CD4-positive, alpha-beta memory T cell (primary cell): ENCODE measurements at regions of chr13 and their contacts with region 1.

Region 1: DNA sequence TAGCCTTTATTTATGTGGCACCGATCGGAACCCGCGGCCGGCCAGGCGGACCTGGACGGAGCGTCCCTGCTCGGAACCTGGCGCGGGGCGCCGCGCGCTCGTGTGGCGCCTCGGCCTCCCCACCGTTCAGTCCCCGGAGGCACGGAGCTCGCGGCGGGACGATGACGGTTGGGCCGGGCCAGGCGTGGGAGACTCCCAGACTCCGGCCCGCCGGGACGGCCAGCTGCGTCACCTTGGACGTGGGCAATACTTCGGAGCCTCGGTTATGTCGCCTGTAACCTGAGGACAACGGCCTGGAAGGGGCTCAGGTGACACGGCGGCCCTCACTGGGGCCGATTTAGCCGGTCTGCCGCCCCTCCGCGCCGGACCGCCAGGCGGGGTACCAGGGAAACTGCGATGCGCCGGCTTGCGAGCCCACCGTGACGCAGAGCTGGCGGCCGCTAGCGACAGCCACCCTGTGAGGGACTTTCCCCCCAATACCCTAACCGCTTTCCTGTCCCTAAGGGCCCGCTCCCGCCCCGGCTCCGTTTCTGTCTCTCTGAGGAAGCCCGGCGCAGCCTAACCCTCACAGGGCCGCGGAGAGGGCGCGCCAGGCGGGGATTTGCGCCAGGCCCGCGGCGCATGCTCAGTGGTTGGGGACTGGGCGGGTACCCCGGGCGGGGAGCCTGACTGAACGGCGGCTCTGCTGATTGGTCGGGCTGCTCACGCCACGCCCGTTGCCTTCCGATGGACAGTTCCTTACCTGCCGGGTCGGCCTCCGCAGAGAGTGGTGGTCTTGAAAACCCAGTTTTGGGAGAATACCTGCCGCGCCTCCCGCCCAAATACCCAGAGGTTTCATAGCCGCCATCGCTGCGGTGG is 109.5 kb upstream of the DOCK9 start:
- DNase-seq: peak; percentile 91 to 94 (median 92)
- H3K4me3 ChIP-seq: peak overlapping the region; percentile 37 to 88
- H3K4me3 Mint-ChIP-seq: peak overlapping the region; percentile 96 to 99 (median 98)
- H3K27ac ChIP-seq: peak overlapping the region; percentile 83
- H3K27ac Mint-ChIP-seq: peak overlapping the region; percentile 99 to 100 (median 99)
- H3K4me1 ChIP-seq: peaks cover 40% of the 10 kb centered on the region
- H3K4me1 Mint-ChIP-seq: peaks cover 27 to 53% (median 39%) of the 10 kb centered on the region in 4 donors
- H3K27me3 ChIP-seq: no peaks in the 10 kb centered on the region
- H3K27me3 Mint-ChIP-seq: no peaks in the 10 kb centered on the region

Region 2: GRCh38 chr13:98869408-98870090 is 217.8 kb before region 1 on chr13:
- CTCF ChIA-PET with region 1: interaction called, 5 read pairs
- POLR2A ChIA-PET with region 1: no interaction called
- intact Hi-C with region 1: loop called (anchors 5 kb)
- DNase-seq: peak in 3 of 5 donors; percentile 6 to 11 (median 10)
- H3K4me3 ChIP-seq: no peak overlapping the region
- H3K4me3 Mint-ChIP-seq: no peak overlapping the region
- H3K27ac ChIP-seq: no peak overlapping the region
- H3K27ac Mint-ChIP-seq: peak overlapping the region in 2 of 7 donors; percentile 6 to 41
- H3K4me1 ChIP-seq: no peaks in the 10 kb centered on the region
- H3K4me1 Mint-ChIP-seq: peaks cover 0 to 4% (median 3%) of the 10 kb centered on the region in 4 donors
- H3K27me3 ChIP-seq: no peaks in the 10 kb centered on the region
- H3K27me3 Mint-ChIP-seq: no peaks in the 10 kb centered on the region

Region 3: GRCh38 chr13:99033814-99034213 is 53.5 kb before region 1 on chr13:
- CTCF ChIA-PET with region 1: interaction called, 13 read pairs
- POLR2A ChIA-PET with region 1: interaction called, 7 read pairs
- intact Hi-C with region 1: loop called (anchors 2 kb)
- DNase-seq: peak in 2 of 5 donors; percentile 21 to 28
- H3K4me3 ChIP-seq: no peak overlapping the region
- H3K4me3 Mint-ChIP-seq: no peak overlapping the region
- H3K27ac ChIP-seq: no peak overlapping the region
- H3K27ac Mint-ChIP-seq: peak overlapping the region in 3 of 7 donors; percentile 55 to 85 (median 63)
- H3K4me1 ChIP-seq: peaks cover 22% of the 10 kb centered on the region
- H3K4me1 Mint-ChIP-seq: peaks cover 32 to 76% (median 51%) of the 10 kb centered on the region in 4 donors
- H3K27me3 ChIP-seq: no peaks in the 10 kb centered on the region
- H3K27me3 Mint-ChIP-seq: no peaks in the 10 kb centered on the region

Region 4: GRCh38 chr13:99046851-99047250 is 40.5 kb before region 1 on chr13:
- CTCF ChIA-PET with region 1: interaction called, 15 read pairs
- POLR2A ChIA-PET with region 1: interaction called, 226 read pairs
- intact Hi-C with region 1: loop called (anchors 1 kb)
- DNase-seq: no peak
- H3K4me3 ChIP-seq: peak overlapping the region; percentile 1 to 32
- H3K4me3 Mint-ChIP-seq: peak overlapping the region; percentile 70 to 90 (median 81)
- H3K27ac ChIP-seq: peak overlapping the region; percentile 71
- H3K27ac Mint-ChIP-seq: peak overlapping the region; percentile 91 to 98 (median 95)
- H3K4me1 ChIP-seq: peaks cover 99% of the 10 kb centered on the region
- H3K4me1 Mint-ChIP-seq: peaks cover 79 to 100% (median 89%) of the 10 kb centered on the region in 4 donors
- H3K27me3 ChIP-seq: no peaks in the 10 kb centered on the region
- H3K27me3 Mint-ChIP-seq: no peaks in the 10 kb centered on the region

Region 5: GRCh38 chr13:99067160-99067985 is 20.0 kb before region 1 on chr13:
- CTCF ChIA-PET with region 1: interaction called, 5 read pairs
- POLR2A ChIA-PET with region 1: interaction called, 21 read pairs
- intact Hi-C with region 1: no loop called
- DNase-seq: no peak
- H3K4me3 ChIP-seq: no peak overlapping the region
- H3K4me3 Mint-ChIP-seq: peak overlapping the region in 7 of 8 donors; percentile 42 to 75 (median 67)
- H3K27ac ChIP-seq: no peak overlapping the region
- H3K27ac Mint-ChIP-seq: peak overlapping the region; percentile 56 to 86 (median 82)
- H3K4me1 ChIP-seq: peaks cover 55% of the 10 kb centered on the region
- H3K4me1 Mint-ChIP-seq: peaks cover 56 to 93% (median 74%) of the 10 kb centered on the region in 4 donors
- H3K27me3 ChIP-seq: no peaks in the 10 kb centered on the region
- H3K27me3 Mint-ChIP-seq: no peaks in the 10 kb centered on the region

Region 6: GRCh38 chr13:99176309-99177276 is 89.3 kb after region 1 on chr13:
- CTCF ChIA-PET with region 1: interaction called, 10 read pairs
- POLR2A ChIA-PET with region 1: interaction called, 3 read pairs
- intact Hi-C with region 1: loop called (anchors 1 kb)
- DNase-seq: peak; percentile 69 to 79 (median 75)
- H3K4me3 ChIP-seq: peak overlapping the region in 1 of 2 donors; percentile 19
- H3K4me3 Mint-ChIP-seq: peak overlapping the region in 7 of 8 donors; percentile 62 to 80 (median 71)
- H3K27ac ChIP-seq: no peak overlapping the region
- H3K27ac Mint-ChIP-seq: peak overlapping the region in 6 of 7 donors; percentile 37 to 81 (median 68)
- H3K4me1 ChIP-seq: peaks cover 44% of the 10 kb centered on the region
- H3K4me1 Mint-ChIP-seq: peaks cover 32 to 43% (median 36%) of the 10 kb centered on the region in 4 donors
- H3K27me3 ChIP-seq: no peaks in the 10 kb centered on the region
- H3K27me3 Mint-ChIP-seq: no peaks in the 10 kb centered on the region

Region 7: GRCh38 chr13:99258210-99258860 is 171.0 kb after region 1 on chr13 and contains the start of gene GPR18:
- CTCF ChIA-PET with region 1: no interaction called
- POLR2A ChIA-PET with region 1: interaction called, 3 read pairs
- intact Hi-C with region 1: loop called (anchors 5 kb)
- DNase-seq: peak; percentile 50 to 69 (median 62)
- H3K4me3 ChIP-seq: peak within 1 kb of the TSS; percentile 52 to 67
- H3K4me3 Mint-ChIP-seq: peak within 1 kb of the TSS; percentile 89 to 98 (median 94)
- H3K27ac ChIP-seq: peak within 1 kb of the TSS; percentile 60
- H3K27ac Mint-ChIP-seq: peak within 1 kb of the TSS; percentile 84 to 96 (median 94)
- H3K4me1 ChIP-seq: peaks cover 55% of the 10 kb centered on the region
- H3K4me1 Mint-ChIP-seq: peaks cover 47 to 85% (median 59%) of the 10 kb centered on the region in 4 donors
- H3K27me3 ChIP-seq: no peaks in the 10 kb centered on the region
- H3K27me3 Mint-ChIP-seq: no peaks in the 10 kb centered on the region
- total RNA-seq, gene GPR18: 21.5 to 22.8 TPM

Region 8: GRCh38 chr13:100176801-100177400 is 1089.6 kb after region 1 on chr13:
- CTCF ChIA-PET with region 1: no interaction called
- POLR2A ChIA-PET with region 1: no interaction called
- intact Hi-C with region 1: no loop called
- DNase-seq: no peak
- H3K4me3 ChIP-seq: no peak overlapping the region
- H3K4me3 Mint-ChIP-seq: no peak overlapping the region
- H3K27ac ChIP-seq: no peak overlapping the region
- H3K27ac Mint-ChIP-seq: no peak overlapping the region
- H3K4me1 ChIP-seq: no peaks in the 10 kb centered on the region
- H3K4me1 Mint-ChIP-seq: peaks cover 1 to 8% (median 4%) of the 10 kb centered on the region in 4 donors
- H3K27me3 ChIP-seq: no peaks in the 10 kb centered on the region
- H3K27me3 Mint-ChIP-seq: no peaks in the 10 kb centered on the region